ENCODE measurements at regions of chr11 and their contacts with region 1.

Region 1: DNA sequence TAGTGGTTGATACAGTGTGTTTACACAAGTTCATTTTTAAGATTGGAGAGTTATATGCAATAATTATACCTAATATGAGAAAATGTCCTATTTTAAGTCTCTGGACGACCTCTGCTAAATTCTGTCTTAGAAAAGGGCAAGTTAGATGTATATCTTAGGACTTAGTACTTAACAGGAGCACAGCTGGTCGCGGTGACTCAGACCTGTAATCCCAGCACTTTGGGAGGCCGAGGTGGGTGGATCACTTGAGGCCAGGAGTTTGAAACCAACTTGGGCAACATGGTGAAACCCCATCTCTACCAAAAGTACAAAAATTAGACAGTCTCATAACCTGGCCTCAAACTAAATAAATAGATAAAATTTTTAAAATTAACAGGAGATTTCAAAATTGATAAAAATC is 27.2 kb downstream of the BSX start:
- DNase-seq: no peak
- H3K4me3 ChIP-seq: no peak overlapping the region
- H3K27ac ChIP-seq: no peak overlapping the region
- H3K4me1 ChIP-seq: no peaks in the 10 kb centered on the region
- H3K27me3 ChIP-seq: peaks cover 4% of the 10 kb centered on the region
- CTCF ChIP-seq: no peak

Region 2: GRCh38 chr11:122808478-122808869 is 146.0 kb before region 1 on chr11:
- CTCF ChIA-PET with region 1: no interaction called
- dilution Hi-C with region 1: no loop called
- in situ Hi-C with region 1: no loop called
- intact Hi-C with region 1: no loop called
- DNase-seq: peak; percentile 71
- H3K4me3 ChIP-seq: no peak overlapping the region
- H3K27ac ChIP-seq: peak overlapping the region; percentile 59
- H3K4me1 ChIP-seq: peaks cover 50% of the 10 kb centered on the region
- H3K27me3 ChIP-seq: no peaks in the 10 kb centered on the region
- CTCF ChIP-seq: no peak

Region 3: GRCh38 chr11:122910775-122911174 is 43.7 kb before region 1 on chr11:
- CTCF ChIA-PET with region 1: no interaction called
- dilution Hi-C with region 1: loop called (anchors 5 kb)
- in situ Hi-C with region 1: no loop called
- intact Hi-C with region 1: no loop called
- DNase-seq: peak; percentile 8
- H3K4me3 ChIP-seq: no peak overlapping the region
- H3K27ac ChIP-seq: no peak overlapping the region
- H3K4me1 ChIP-seq: no peaks in the 10 kb centered on the region
- H3K27me3 ChIP-seq: no peaks in the 10 kb centered on the region
- CTCF ChIP-seq: peak; percentile 12 to 49

Region 4: DNA sequence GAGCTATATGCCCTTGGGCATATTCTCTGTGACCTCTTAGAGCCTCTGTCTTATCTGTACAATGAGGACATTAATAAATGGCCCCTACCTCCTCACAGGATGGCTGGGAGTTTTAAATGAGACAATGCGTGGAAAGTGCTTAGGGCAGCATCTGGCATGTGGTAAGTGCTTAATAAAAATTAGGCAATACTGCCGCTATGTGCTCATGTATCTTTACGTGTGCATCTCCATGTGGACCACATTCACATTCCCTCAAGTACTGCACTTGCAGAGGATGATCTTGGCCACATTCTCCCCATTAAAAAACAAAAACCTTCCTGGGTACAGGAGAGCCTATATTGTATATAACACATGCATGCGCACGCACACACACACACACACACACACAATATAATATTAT is 46.3 kb after region 1 on chr11:
- CTCF ChIA-PET with region 1: no interaction called
- dilution Hi-C with region 1: loop called (anchors 5 kb)
- in situ Hi-C with region 1: no loop called
- intact Hi-C with region 1: no loop called
- DNase-seq: no peak
- H3K4me3 ChIP-seq: no peak overlapping the region
- H3K27ac ChIP-seq: no peak overlapping the region
- H3K4me1 ChIP-seq: no peaks in the 10 kb centered on the region
- H3K27me3 ChIP-seq: no peaks in the 10 kb centered on the region
- CTCF ChIP-seq: no peak

Measured in mammary epithelial cell (primary cell).